ENCODE measurements at regions of chr3 and their contacts with region 1.

Region 1: GRCh38 chr3:125437631-125438435 is 62.7 kb upstream of the ZNF148 start:
- DNase-seq: peak; percentile 34
- H3K4me3 Mint-ChIP-seq: no peak overlapping the region
- H3K27ac Mint-ChIP-seq: no peak overlapping the region
- H3K4me1 Mint-ChIP-seq: peaks cover 2% of the 10 kb centered on the region
- H3K27me3 Mint-ChIP-seq: peaks cover 4% of the 10 kb centered on the region

Region 2: DNA sequence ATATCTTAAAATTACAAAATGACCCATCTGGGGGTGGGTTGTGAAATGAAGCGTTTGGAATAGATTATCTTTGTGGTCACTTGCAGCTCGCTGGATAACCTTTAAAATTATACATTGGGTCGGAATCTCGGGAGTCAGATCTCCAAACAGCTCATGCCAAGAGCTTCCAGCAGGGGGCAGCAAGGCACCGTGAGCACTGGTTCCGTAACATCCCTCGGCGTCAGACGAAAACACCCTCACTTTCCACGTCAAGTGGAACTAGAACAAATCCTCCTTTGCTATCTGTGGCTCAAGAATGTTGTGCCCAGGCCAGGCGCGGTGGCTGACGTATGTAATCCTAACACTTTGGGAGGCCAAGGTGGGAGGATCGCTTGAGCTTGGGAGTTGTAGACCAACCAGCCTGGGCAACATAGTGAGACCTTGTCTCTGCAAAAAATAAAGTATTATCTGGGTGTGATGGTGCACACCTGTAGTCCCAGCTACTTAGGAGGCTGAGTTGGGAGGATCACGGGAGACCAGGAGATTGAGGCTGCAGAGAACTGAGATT is 676.5 kb before region 1 on chr3:
- intact Hi-C with region 1: loop called (anchors 2 kb)
- DNase-seq: peak; percentile 60
- H3K4me3 Mint-ChIP-seq: no peak overlapping the region
- H3K27ac Mint-ChIP-seq: no peak overlapping the region
- H3K4me1 Mint-ChIP-seq: peaks cover 3% of the 10 kb centered on the region
- H3K27me3 Mint-ChIP-seq: peaks cover 2% of the 10 kb centered on the region

Region 3: DNA sequence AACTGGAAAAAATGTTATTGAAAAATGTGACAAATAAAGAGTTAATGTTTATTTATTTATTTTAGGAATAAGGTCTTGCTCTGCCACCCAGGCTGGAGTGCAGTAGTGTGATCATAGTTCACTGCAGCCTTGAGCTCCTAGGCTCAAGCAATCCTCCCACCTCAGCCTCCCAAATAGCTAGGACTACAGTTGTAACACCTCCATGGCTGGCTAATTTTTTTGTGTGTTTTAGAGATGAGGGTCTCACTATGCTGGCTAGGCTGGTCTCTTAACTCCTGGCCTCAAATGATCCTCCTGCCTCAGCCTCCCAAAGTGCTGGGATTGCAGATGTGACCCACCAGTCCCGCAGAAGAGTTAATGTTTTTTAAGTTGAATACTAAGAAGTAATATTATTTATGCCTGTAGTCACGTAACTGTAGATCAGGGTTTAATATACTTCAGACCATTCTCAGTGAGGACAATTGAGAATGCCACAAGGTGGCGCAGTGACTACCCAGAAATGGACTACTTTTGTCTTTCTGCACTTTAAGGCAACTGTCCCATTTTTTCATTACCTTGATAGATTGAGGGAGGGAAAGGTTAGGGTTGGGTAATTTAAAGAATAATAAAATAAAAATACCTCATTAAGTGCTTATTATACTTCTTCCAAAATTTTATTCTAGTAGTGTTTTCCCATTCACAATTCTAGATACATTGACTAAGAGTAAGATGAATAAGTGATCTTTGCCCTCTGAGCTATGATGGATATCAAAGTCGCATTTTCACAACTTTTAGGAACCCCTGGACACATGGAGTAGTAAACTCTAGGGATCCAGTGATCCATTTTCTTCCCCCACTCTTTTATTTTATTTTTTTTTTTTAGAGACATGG is 509.3 kb before region 1 on chr3:
- intact Hi-C with region 1: loop called (anchors 1 kb)
- DNase-seq: peak; percentile 35
- H3K4me3 Mint-ChIP-seq: no peak overlapping the region
- H3K27ac Mint-ChIP-seq: no peak overlapping the region
- H3K4me1 Mint-ChIP-seq: peaks cover 4% of the 10 kb centered on the region
- H3K27me3 Mint-ChIP-seq: peaks cover 58% of the 10 kb centered on the region

Region 4: GRCh38 chr3:124995460-124995994 is 442.3 kb before region 1 on chr3:
- intact Hi-C with region 1: loop called (anchors 1 kb)
- DNase-seq: peak; percentile 25
- H3K4me3 Mint-ChIP-seq: no peak overlapping the region
- H3K27ac Mint-ChIP-seq: no peak overlapping the region
- H3K4me1 Mint-ChIP-seq: no peaks in the 10 kb centered on the region
- H3K27me3 Mint-ChIP-seq: no peaks in the 10 kb centered on the region

Region 5: DNA sequence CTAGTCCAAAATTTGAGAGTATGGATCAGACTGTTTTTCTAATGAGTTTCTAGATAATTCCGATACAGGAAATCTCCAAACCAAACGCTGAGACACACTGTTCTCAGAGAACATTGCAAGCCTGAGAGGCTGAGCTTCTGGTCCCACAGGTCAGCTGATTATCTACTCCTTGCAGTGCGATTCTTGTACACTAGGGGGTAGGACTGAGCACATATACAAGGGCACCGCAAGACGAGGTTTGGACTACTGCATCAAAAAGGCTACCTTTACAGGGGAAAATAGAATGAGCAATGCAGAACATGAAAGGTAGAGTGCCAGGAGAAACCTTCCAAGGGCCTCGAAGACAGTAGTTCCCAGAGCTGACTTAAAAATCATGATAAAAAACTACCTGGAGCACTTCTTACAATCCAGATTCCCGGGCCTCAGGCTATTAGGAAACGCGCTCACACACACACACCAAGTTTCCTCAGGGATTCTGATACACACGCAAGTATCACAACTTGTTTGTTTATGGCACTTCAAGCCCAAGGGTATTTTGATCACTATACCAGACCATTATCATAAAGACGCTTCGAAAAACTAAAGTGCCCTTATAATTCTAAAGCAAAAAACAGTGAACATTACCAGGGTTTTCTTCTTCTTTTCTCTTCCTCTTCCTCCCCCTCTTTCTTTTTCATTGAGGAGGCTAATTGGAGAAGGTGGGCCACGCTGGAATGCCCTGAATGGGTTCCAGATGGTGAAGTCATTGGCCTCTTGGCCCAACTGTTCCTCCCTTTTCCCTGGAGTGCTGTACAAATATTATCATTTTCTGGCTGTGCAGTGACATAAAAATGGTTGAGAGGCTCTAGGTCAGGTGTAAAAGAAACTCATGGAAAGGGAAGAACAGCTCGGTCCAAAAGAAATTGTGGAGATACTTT is 287.1 kb before region 1 on chr3:
- intact Hi-C with region 1: loop called (anchors 5 kb)
- DNase-seq: peak; percentile 52
- H3K4me3 Mint-ChIP-seq: no peak overlapping the region
- H3K27ac Mint-ChIP-seq: no peak overlapping the region
- H3K4me1 Mint-ChIP-seq: peaks cover 22% of the 10 kb centered on the region
- H3K27me3 Mint-ChIP-seq: peaks cover 38% of the 10 kb centered on the region

Region 6: GRCh38 chr3:125310623-125311081 is 127.2 kb before region 1 on chr3:
- intact Hi-C with region 1: loop called (anchors 10 kb)
- DNase-seq: peak; percentile 43
- H3K4me3 Mint-ChIP-seq: peak overlapping the region; percentile 87
- H3K27ac Mint-ChIP-seq: peak overlapping the region; percentile 88
- H3K4me1 Mint-ChIP-seq: peaks cover 30% of the 10 kb centered on the region
- H3K27me3 Mint-ChIP-seq: no peaks in the 10 kb centered on the region

Region 7: DNA sequence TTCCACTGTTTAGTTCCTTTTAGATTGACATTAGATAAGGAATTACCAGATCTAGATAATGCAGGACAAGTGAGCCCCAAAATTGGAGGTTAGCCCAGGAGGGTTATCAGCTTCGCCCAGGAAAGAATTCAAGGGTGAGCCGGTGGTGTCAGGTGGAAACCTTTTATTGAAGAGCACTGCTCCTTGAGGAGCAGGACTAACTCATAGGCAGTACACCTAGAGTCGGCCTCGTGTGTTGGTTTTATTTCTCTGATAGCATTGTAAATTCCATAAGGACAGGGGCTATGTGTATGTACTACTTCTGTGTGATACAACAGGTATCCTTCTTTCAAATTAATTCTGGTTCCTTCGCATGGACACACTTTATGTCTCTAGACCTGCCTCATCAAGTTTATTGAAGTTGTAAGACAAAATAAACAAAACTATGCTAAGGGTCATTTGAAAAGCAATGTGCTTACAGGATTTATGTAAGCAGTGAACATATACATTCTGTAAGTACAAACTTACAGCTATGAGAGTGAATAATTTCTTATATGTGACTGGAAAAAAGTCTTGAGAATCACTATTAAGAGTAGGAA is 25.0 kb after region 1 on chr3:
- intact Hi-C with region 1: no loop called
- DNase-seq: no peak
- H3K4me3 Mint-ChIP-seq: no peak overlapping the region
- H3K27ac Mint-ChIP-seq: no peak overlapping the region
- H3K4me1 Mint-ChIP-seq: no peaks in the 10 kb centered on the region
- H3K27me3 Mint-ChIP-seq: no peaks in the 10 kb centered on the region

Region 8: GRCh38 chr3:125585595-125586223 is 147.9 kb after region 1 on chr3:
- intact Hi-C with region 1: loop called (anchors 10 kb)
- DNase-seq: peak; percentile 22
- H3K4me3 Mint-ChIP-seq: no peak overlapping the region
- H3K27ac Mint-ChIP-seq: no peak overlapping the region
- H3K4me1 Mint-ChIP-seq: peaks cover 10% of the 10 kb centered on the region
- H3K27me3 Mint-ChIP-seq: no peaks in the 10 kb centered on the region

Measured in activated T-helper 2 cell treated with anti-CD3 and anti-CD28 coated beads, Interferon-gamma antibody, Interleukin-2, Interleukin-4, amounts not matched to agents 10 μg/mL and 5 μg/mL and 100 μg/mL, durations not matched to agents 14 hours and 24 hours and 36 hours (primary cell).